ENCODE measurements at regions of chr11 and their contacts with region 1.

Region 1: DNA sequence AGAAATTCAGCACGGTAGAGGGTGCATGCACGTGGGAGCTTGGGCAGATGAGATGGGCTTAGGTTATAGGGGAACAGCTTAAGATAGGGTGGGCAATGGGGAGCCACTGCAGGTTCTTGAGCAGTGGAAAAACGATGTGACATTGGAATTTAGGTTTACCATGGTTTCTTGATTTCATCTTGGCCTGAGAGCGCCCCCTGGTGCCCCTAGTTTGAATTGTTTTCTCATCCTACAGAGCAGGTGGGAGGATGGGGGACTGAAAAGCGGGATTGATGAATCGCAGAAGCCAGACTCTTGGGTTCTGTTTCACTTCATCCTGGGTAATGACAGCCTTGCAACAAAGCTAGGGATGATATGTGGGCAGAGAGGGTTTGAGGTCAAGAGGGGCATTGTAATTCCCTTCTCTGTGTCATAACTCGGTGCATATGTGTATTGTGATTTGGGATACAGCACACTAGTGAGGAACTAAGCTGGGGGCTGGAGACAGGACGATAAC is 6.7 kb upstream of the MCAM start:
- DNase-seq: peak; percentile 64
- H3K4me3 Mint-ChIP-seq: no peak overlapping the region
- H3K27ac Mint-ChIP-seq: no peak overlapping the region
- H3K4me1 Mint-ChIP-seq: peaks cover 27% of the 10 kb centered on the region
- H3K27me3 Mint-ChIP-seq: peaks cover 13% of the 10 kb centered on the region

Region 2: DNA sequence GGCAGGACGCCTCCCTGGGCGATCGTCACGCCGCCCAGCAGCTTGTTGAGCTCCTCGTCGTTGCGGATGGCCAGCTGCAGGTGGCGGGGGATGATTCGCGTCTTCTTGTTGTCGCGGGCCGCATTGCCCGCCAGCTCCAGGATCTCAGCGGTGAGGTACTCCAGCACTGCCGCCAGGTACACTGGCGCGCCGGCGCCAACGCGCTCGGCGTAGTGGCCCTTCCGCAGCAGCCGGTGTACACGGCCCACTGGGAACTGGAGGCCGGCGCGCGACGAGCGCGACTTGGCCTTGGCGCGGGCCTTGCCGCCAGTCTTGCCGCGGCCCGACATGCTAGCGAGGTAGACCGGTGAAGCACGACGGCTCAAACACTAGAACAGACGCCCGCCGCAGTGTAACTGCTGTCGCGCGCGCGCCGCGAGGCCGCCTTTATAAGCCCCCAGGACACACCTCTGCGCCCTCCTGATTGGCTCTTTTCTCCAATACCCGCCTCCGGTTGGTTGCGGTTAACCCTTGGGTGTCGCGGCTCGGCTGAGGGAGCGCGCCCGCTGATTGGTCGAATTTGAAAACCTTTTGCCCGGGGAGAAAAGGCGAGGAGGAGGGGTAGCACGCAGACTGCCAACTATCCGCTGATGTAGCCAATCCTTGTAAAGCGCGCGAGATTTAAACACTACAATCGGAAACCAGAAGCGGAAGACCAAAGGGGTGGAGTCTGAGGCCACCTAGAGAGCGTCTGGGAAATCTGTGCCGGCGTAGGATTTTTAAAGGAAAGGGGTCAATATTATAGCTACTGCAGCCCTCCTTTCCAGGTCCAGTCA is 228.3 kb before region 1 on chr11:
- intact Hi-C with region 1: loop called (anchors 5 kb)
- DNase-seq: peak; percentile 100
- H3K4me3 Mint-ChIP-seq: peak overlapping the region; percentile 95
- H3K27ac Mint-ChIP-seq: peak overlapping the region; percentile 91
- H3K4me1 Mint-ChIP-seq: peaks cover 59% of the 10 kb centered on the region
- H3K27me3 Mint-ChIP-seq: peaks cover 4% of the 10 kb centered on the region

Region 3: DNA sequence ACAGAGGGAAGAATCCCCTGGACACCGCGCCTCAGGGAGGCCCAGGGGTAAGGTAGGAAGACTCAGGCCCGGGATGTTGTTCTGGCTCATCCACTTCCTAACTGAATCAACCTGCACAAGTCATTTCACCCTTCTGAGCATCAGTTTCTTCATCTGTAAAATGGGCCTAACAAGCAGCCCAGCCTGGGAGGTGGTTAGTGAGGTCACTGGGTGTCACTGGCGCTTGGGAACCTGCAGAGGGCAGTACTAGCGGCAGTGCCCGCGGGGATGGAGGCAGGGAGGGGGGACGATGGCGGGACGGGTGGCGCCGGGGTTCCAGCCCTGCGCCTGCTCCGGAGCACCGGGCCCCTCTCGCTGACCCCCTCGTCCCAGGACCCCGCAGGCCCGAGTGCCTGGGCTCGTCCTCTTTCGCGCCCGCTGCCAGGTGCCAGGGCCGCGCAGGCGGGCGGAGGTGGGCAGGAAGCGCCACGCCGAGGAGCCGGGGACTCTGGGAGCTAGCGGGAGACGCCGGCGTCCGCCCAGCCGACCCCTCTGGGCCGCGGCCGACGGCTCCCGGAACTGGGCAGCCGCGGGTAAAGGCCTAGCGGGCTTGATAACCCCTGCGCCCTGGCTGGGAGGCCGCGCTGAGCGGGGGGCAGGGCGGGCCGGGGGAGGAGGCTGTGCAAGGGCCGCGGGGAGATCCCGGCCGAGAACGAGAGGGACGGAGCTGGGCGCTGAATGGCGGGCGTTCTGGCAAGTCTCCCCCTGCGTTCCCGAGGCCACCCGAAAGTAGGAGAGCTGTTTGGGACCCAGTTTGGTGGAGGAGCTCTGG is 154.9 kb before region 1 on chr11 and contains the start of gene NLRX1:
- intact Hi-C with region 1: loop called (anchors 1 kb)
- DNase-seq: peak; percentile 77
- H3K4me3 Mint-ChIP-seq: peak within 1 kb of the TSS; percentile 92
- H3K27ac Mint-ChIP-seq: peak within 1 kb of the TSS; percentile 94
- H3K4me1 Mint-ChIP-seq: peaks cover 24% of the 10 kb centered on the region
- H3K27me3 Mint-ChIP-seq: peaks cover 2% of the 10 kb centered on the region
- total RNA-seq, gene NLRX1: 24.1 and 29.5 TPM in 2 replicates

Region 4: GRCh38 chr11:119205574-119206510 is 117.7 kb before region 1 on chr11 and contains the start of gene CBL:
- intact Hi-C with region 1: loop called (anchors 1 kb)
- DNase-seq: peak; percentile 89
- H3K4me3 Mint-ChIP-seq: peak within 1 kb of the TSS; percentile 98
- H3K27ac Mint-ChIP-seq: peak within 1 kb of the TSS; percentile 97
- H3K4me1 Mint-ChIP-seq: peaks cover 28% of the 10 kb centered on the region
- H3K27me3 Mint-ChIP-seq: no peaks in the 10 kb centered on the region
- total RNA-seq, gene CBL: 38.1 and 39.9 TPM in 2 replicates

Region 5: GRCh38 chr11:119284344-119285157 is 39.0 kb before region 1 on chr11:
- intact Hi-C with region 1: loop called (anchors 1 kb)
- DNase-seq: no peak
- H3K4me3 Mint-ChIP-seq: no peak overlapping the region
- H3K27ac Mint-ChIP-seq: no peak overlapping the region
- H3K4me1 Mint-ChIP-seq: peaks cover 27% of the 10 kb centered on the region
- H3K27me3 Mint-ChIP-seq: no peaks in the 10 kb centered on the region

Region 6: GRCh38 chr11:119334174-119334930 is 10.8 kb after region 1 on chr11 and contains the start of gene RNF26:
- intact Hi-C with region 1: loop called (anchors 1 kb)
- DNase-seq: peak; percentile 93
- H3K4me3 Mint-ChIP-seq: peak within 1 kb of the TSS; percentile 97
- H3K27ac Mint-ChIP-seq: peak within 1 kb of the TSS; percentile 96
- H3K4me1 Mint-ChIP-seq: peaks cover 53% of the 10 kb centered on the region
- H3K27me3 Mint-ChIP-seq: peaks cover 25% of the 10 kb centered on the region
- total RNA-seq, gene RNF26: 26.1 and 27.9 TPM in 2 replicates

Region 7: DNA sequence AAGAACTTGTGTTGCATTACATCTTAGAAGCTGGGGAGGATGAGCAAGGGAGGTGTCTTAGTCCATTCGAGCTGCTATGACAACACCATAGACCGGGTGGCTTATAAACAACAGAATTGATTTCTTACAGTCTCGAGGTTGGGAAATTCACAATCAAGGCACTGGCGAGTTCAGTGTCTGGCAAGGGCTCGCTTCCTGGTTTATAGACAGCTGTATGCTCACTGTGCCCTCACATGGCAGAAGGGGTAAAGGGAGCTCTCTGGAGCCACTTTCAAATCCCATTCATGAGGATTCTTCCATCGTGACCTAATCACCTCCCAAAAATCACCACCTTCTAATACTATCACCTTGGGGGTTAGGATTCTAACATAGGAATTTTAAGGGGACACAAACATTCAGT is 555.4 kb after region 1 on chr11:
- intact Hi-C with region 1: no loop called
- DNase-seq: no peak
- H3K4me3 Mint-ChIP-seq: no peak overlapping the region
- H3K27ac Mint-ChIP-seq: no peak overlapping the region
- H3K4me1 Mint-ChIP-seq: no peaks in the 10 kb centered on the region
- H3K27me3 Mint-ChIP-seq: peaks cover 7% of the 10 kb centered on the region